ENCODE measurements at regions of chr2 and their contacts with region 1.

Region 1: GRCh38 chr2:42944779-42945415 is 152.5 kb upstream of the HAAO start:
- DNase-seq: peak; percentile 59
- H3K4me3 ChIP-seq: no peak overlapping the region
- H3K27ac ChIP-seq: no peak overlapping the region
- H3K4me1 ChIP-seq: peaks cover 5% of the 10 kb centered on the region
- H3K27me3 ChIP-seq: no peaks in the 10 kb centered on the region
- CTCF ChIP-seq: no peak

Region 2: DNA sequence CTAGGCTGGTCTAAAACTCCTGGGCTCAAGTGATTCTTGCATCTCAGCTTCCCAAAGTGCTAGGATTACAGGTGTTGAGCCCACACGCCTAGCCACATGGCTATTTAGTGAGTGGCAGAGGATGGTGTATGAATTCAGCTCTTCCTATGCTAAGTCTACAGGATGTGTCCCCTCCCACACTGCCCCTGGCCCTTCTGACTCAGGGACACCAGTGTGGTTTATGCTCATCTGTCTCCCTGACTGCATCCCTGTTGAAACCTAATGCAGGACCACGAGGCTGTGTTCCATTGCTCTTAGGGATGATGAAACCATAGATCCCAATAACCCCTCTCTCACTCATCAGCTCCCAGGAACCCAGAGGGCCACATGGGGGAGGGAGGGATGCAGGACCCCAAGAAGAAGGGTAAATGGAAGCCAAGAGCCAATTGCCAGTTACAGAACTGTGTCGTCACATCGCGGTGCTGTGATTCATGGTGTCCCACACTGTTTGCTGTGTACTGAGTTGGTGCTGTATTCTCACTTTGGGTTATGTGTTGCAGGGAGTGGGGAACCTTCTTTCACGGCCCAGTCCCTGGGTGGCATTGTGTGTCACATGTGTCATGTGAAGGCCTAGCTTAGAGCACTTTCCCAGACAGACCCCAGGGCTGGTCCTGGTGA is 49.6 kb before region 1 on chr2:
- CTCF ChIA-PET with region 1: no interaction called
- dilution Hi-C with region 1: loop called (anchors 5 kb)
- in situ Hi-C with region 1: no loop called
- intact Hi-C with region 1: no loop called
- DNase-seq: no peak
- H3K4me3 ChIP-seq: no peak overlapping the region
- H3K27ac ChIP-seq: no peak overlapping the region
- H3K4me1 ChIP-seq: peaks cover 6% of the 10 kb centered on the region
- H3K27me3 ChIP-seq: no peaks in the 10 kb centered on the region
- CTCF ChIP-seq: no peak

Region 3: DNA sequence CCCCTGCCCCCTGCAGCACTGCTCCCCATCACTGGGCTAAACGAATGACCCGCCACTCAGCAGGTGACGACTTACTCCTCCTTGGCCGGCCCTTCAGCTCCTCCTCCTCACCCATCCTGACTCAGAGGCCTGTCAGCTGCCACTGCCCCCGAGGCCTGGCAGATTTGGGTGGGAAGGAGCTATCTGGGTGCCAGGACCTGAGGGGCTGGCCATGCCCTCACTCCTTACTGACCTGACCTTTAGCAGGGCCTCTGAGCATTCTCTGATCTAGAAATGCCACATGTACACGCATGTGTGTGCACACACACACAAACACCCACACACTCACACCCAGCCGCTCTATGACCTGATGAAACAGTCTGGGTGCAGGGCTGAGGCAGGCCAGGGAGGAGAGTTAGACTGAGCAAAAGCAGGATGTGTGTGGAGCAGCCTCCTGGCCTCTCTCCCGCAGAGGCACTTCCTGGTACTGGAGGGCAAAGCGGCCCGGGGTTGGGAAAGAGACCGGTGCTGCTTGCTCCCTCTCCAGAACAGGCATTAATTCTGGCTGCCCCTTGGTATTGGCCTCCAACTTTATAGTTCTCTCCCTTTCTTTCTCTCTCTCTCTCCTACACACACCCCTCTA is 213.5 kb after region 1 on chr2:
- CTCF ChIA-PET with region 1: no interaction called
- dilution Hi-C with region 1: no loop called
- in situ Hi-C with region 1: no loop called
- intact Hi-C with region 1: loop called (anchors 1 kb)
- DNase-seq: peak; percentile 94
- H3K4me3 ChIP-seq: no peak overlapping the region
- H3K27ac ChIP-seq: peak overlapping the region; percentile 93
- H3K4me1 ChIP-seq: peaks cover 52% of the 10 kb centered on the region
- H3K27me3 ChIP-seq: no peaks in the 10 kb centered on the region
- CTCF ChIP-seq: no peak

Region 4: DNA sequence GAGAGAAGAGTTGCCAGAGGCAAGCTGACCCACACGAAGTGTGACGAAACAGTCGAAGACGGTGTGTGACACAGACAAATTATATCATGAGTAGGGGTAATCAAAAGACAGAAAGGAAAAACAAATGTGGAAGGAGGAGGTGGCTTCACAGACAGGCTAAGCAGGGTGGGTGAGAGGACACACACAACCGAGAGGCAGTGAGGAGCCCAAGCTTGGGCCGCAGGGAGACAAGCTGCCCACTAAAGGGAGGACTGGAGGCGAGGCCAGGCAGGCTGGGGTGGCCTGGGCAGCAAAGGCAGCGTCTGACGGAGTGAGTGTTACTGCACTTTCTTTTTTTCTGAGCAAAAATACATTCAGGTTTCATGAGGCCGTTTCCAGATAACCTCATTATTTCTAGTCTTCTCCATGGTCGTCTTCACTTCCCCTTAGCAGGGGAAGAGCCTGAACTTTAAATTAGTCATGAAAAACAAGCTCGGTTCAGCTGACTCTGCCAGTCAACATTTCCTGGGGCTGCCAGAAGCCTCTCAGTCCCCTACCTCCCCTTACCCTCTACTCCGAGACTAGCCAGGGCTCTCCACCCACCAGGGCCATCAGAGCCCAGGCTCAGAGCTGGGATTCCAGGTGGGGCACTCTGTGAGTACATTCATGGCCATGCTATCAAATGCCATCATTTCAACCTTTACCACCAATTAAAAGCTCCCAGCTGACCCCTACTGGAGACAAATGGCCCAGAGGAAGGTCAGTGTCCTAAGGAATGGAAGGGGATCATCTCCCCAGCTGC is 295.3 kb after region 1 on chr2:
- CTCF ChIA-PET with region 1: interaction called, 6 read pairs
- dilution Hi-C with region 1: no loop called
- in situ Hi-C with region 1: loop called in 1 of 2 experiments (anchors 10 kb)
- intact Hi-C with region 1: no loop called
- DNase-seq: no peak
- H3K4me3 ChIP-seq: no peak overlapping the region
- H3K27ac ChIP-seq: no peak overlapping the region
- H3K4me1 ChIP-seq: no peaks in the 10 kb centered on the region
- H3K27me3 ChIP-seq: no peaks in the 10 kb centered on the region
- CTCF ChIP-seq: peak in 1 of 2 donors; percentile 18

Region 5: GRCh38 chr2:43542285-43542937 is 597.5 kb after region 1 on chr2:
- CTCF ChIA-PET with region 1: no interaction called
- dilution Hi-C with region 1: no loop called
- in situ Hi-C with region 1: no loop called
- intact Hi-C with region 1: loop called (anchors 1 kb)
- DNase-seq: peak; percentile 23
- H3K4me3 ChIP-seq: no peak overlapping the region
- H3K27ac ChIP-seq: no peak overlapping the region
- H3K4me1 ChIP-seq: peaks cover 30% of the 10 kb centered on the region
- H3K27me3 ChIP-seq: no peaks in the 10 kb centered on the region
- CTCF ChIP-seq: peak; percentile 40

Measured in mammary epithelial cell (primary cell).